ENCODE measurements at regions of chr3 and their contacts with region 1.

Region 1: DNA sequence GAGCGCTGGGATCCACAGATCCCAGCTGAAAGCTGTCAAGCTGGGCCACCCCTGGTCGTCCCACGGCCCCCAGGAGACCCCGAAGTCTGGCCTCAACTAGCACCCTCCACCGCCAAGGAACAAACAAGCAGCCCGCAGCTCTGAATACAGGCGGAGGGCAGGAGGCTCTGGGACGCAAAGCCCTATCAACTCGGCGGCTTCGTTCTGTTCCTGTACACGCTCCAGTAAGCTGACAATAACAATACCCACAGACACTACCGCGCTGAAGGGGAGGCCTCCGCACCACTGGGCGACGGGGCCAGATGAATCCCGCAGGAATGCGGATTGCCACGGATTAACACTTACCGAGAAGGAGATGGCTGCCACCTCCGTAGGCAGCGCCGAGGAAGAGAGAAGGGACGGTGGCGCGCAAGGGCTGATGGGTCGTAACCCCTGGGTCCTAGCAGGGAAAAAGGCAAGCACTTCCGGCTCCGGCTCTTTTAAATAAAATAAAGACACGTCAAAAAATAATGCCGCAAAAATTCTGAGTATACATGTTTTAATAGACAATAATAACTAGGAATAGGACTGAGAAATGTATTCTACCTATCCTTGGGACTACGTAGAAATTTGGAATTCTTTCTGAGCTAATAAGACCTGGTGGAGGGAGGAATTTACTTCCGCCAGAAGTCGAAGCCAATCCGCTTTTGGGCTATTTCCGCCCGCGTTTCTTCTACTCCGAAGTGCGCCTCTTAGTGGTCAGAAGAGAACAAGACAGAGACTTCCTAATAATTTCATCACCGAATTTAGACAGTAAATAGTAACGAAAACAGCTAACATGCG is at the start of gene RPL32:
- DNase-seq: peak; percentile 87
- CTCF ChIP-seq: peak; percentile 78

Region 2: DNA sequence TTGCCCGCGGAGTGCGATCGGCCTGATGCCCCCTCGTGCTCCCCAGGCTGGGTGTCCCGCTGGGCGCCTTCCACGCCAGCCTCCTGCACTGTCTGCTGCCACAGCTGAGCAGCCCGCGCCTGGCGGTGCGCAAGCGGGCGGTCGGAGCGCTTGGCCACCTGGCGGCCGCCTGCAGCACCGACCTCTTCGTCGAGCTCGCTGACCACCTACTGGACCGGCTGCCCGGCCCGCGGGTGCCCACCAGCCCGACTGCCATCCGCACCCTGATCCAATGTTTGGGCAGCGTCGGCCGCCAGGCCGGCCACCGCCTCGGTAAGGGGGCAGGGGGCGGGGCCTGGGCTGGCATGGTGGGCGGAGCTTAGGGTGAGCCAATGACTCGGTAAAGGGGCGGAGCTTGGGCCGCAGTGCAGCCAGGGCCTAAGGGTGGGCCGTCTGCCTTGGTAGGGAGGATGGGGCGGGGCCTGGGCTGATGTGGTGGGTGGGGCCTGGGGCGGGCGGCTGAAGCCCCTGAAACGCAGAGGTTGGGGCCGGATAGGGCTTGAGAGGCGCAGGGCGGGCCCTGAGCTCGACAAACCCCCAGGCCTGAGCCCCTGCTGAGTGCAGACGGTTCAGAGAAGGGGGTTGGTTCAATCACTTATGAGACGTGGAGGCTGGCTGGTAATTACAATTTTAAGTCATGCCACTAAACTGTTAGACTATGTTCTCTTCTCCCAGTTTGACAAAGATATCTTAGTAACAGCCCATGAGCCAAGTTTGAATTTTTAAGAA is 31.2 kb before region 1 on chr3:
- CTCF ChIA-PET with region 1: interaction called, 23 read pairs
- POLR2A ChIA-PET with region 1: no interaction called
- DNase-seq: peak; percentile 99
- CTCF ChIP-seq: peak; percentile 65

Region 3: GRCh38 chr3:12822725-12823373 is 18.5 kb before region 1 on chr3:
- CTCF ChIA-PET with region 1: interaction called, 87 read pairs
- POLR2A ChIA-PET with region 1: interaction called, 5 read pairs
- DNase-seq: no peak
- CTCF ChIP-seq: no peak

Region 4: GRCh38 chr3:12853191-12853741 is 11.9 kb after region 1 on chr3:
- CTCF ChIA-PET with region 1: interaction called, 17 read pairs
- POLR2A ChIA-PET with region 1: no interaction called
- DNase-seq: no peak
- CTCF ChIP-seq: no peak

Region 5: GRCh38 chr3:12868039-12869034 is 27.0 kb after region 1 on chr3:
- CTCF ChIA-PET with region 1: interaction called, 22 read pairs
- POLR2A ChIA-PET with region 1: no interaction called
- DNase-seq: peak; percentile 79
- CTCF ChIP-seq: peak; percentile 95

Region 6: GRCh38 chr3:13145131-13145825 is 303.9 kb after region 1 on chr3:
- CTCF ChIA-PET with region 1: no interaction called
- POLR2A ChIA-PET with region 1: no interaction called
- DNase-seq: no peak
- CTCF ChIP-seq: no peak